Ascending aorta (tissue), 2 donors: ENCODE measurements at regions of chr12 and their contacts with region 1.

Region 1: DNA sequence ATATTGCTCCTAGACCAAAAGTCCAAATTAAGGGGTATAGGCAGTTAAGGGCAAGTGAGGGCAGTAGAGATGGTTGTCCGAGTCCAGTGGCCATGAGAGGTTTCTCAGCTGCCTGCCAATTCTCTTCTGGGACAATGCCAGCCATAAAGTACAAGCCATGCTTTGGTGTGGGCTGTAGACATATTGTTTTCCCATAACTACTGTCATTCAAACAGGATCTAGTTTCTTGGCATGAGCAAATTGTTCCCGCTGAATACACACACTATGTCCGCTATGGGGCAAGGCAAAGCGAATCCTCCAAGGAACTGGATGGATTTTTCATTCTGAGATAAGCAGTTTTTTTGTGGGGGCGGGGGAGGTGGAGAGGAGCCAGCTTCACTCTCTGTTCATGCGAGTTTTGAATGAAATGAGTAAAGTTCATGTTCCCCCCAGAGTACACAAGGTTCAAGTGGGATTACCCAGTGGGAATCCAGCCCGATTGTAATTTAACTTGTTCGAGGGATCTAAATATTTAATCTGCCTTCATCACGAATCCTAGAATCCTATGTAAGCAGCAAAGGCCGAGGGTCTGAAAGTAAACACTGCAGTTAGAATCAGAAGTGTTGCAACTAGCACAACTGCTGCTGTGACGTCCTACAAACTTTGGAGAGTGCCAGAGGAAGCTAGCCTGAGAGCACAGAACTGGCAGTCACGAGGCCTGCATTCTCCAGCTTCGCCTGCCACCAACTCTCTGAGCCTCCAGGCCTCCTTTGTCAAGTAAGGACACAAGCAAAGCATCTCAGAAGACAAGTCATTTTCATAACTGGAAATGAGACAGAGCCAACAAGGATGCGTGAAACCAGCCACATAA is 137.0 kb downstream of the CRADD start:
- DNase-seq: peak; percentile 21 to 92
- H3K4me3 ChIP-seq: peak overlapping the region; percentile 24 to 43
- H3K27ac ChIP-seq: peak overlapping the region; percentile 85 to 98
- H3K4me1 ChIP-seq: peaks cover 4 to 39% of the 10 kb centered on the region in 2 donors
- H3K27me3 ChIP-seq: no peaks in the 10 kb centered on the region
- CTCF ChIP-seq: no peak

Region 2: DNA sequence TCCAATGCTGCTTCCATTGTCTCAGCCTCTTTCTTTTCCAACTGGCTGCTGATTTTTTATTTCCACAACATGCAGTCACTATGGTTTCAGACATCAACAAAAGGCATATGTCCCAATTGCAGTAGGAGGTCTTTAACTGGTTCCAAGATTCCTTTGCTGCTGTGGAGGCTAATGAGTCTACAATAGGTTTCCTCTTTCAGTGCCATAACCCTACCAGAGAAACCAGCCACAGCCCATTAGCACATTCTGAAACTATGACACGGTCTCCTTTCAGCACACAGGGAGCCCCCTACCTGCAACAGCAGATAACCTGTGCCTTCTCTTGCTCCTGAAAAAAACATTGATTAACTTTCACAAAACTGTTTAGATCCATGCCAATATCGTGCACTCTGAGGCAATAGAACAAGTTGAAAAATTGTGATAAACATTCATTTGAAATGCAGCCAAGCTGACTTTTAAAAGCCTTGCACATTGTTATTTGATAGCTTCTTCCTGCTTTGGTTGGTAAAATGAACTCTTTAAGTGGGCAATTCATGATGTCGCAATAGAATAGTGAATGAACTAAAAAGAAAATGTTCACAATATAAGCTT is 1079.0 kb before region 1 on chr12:
- intact Hi-C with region 1: no loop called
- DNase-seq: no peak
- H3K4me3 ChIP-seq: no peak overlapping the region
- H3K27ac ChIP-seq: no peak overlapping the region
- H3K4me1 ChIP-seq: no peaks in the 10 kb centered on the region
- H3K27me3 ChIP-seq: no peaks in the 10 kb centered on the region
- CTCF ChIP-seq: no peak

Region 3: DNA sequence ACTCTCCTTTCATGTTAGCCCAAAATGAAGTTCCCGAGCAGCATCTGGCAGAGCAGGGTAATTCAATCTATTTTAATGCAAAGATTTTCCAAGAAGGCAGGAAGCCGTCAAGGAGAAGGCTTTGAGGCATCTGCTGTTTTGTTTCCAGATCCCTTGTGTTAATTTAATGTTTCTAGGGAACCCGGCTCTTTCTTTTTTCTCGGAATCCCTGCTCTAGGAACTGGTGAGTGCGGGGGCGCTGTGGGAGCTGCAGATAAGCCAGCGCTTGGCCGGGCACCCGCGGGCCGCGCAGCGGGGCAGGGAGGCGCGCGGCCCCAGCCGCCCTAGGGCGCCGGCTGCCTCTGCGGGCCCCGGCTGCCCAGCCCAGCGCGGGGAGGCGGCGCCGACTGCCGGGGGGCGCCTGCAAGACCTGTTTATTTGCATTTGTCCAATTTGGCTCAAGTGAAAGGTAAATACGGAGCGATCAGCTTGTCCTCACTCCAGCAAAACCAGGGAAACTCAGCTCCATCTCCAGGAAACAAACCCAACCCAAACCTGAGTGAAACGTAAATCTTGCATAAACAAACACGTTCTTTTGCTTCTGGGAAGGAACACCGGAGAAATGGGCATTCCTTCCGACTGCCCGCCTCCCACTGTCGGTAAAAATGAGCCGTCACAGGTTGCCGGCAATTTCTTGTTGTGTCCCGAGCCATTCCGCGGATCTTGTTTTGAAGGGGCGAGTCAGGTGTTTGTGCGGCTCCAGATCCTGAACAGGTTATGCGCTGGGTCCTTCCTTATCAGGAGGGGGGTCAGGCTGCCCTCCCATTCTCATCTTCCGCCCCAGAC is 71.9 kb before region 1 on chr12:
- intact Hi-C with region 1: loop called (anchors 5 kb)
- DNase-seq: peak in 1 of 2 donors; percentile 90
- H3K4me3 ChIP-seq: peak overlapping the region; percentile 61 to 76
- H3K27ac ChIP-seq: peak overlapping the region; percentile 90 to 93
- H3K4me1 ChIP-seq: peaks cover 2 to 18% of the 10 kb centered on the region in 2 donors
- H3K27me3 ChIP-seq: no peaks in the 10 kb centered on the region
- CTCF ChIP-seq: peak; percentile 17 to 62 (median 39)

Region 4: GRCh38 chr12:93785262-93786010 is 28.8 kb before region 1 on chr12:
- intact Hi-C with region 1: loop called (anchors 2 kb)
- DNase-seq: peak; percentile 29 to 85
- H3K4me3 ChIP-seq: peak overlapping the region in 1 of 2 donors; percentile 24
- H3K27ac ChIP-seq: peak overlapping the region; percentile 78 to 86
- H3K4me1 ChIP-seq: peaks cover 14 to 35% of the 10 kb centered on the region in 2 donors
- H3K27me3 ChIP-seq: no peaks in the 10 kb centered on the region
- CTCF ChIP-seq: no peak

Region 5: GRCh38 chr12:93883436-93884154 is 69.4 kb after region 1 on chr12:
- intact Hi-C with region 1: no loop called
- DNase-seq: no peak
- H3K4me3 ChIP-seq: no peak overlapping the region
- H3K27ac ChIP-seq: no peak overlapping the region
- H3K4me1 ChIP-seq: no peaks in the 10 kb centered on the region
- H3K27me3 ChIP-seq: no peaks in the 10 kb centered on the region
- CTCF ChIP-seq: no peak

Region 6: DNA sequence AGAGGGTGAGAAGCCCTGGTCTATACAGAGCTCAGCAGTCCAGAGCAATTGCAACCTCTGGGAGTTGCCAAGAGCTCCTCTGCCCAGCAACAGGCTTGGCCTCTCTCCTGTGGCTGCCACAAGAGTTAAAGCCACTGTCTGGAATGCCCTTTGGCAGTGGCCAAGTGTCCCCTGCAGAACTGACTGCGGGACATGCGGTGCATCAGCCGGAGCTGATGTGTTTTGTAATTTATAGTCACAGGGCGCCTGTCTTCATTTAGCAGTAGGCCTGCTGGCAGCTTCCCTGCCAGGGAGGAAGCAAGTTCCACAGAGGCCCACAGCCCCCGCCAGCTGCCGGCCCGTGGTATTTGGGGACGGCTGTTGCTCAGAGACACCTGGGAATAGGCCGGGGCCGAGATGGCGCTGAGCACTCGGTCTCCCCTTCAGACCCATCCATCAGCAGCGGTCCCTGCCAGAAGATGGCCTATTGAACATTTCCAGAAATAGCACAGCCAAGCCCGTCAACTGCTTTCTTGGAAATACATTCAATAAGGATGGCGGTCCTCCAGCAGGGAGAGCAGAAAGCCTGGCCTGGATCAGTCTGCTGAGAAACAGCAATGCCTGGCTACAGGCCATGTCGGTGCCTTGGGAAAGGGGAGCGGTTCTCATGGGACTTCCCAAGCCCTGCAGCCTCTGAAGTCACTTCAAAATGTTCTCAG is 80.3 kb after region 1 on chr12:
- intact Hi-C with region 1: loop called (anchors 5 kb)
- DNase-seq: peak; percentile 57 to 94
- H3K4me3 ChIP-seq: peak overlapping the region in 1 of 2 donors; percentile 2
- H3K27ac ChIP-seq: peak overlapping the region; percentile 73 to 75
- H3K4me1 ChIP-seq: peaks cover 4 to 17% of the 10 kb centered on the region in 2 donors
- H3K27me3 ChIP-seq: no peaks in the 10 kb centered on the region
- CTCF ChIP-seq: no peak

Region 7: GRCh38 chr12:93957870-93958269 is 143.7 kb after region 1 on chr12:
- intact Hi-C with region 1: no loop called
- DNase-seq: no peak
- H3K4me3 ChIP-seq: no peak overlapping the region
- H3K27ac ChIP-seq: no peak overlapping the region
- H3K4me1 ChIP-seq: no peaks in the 10 kb centered on the region
- H3K27me3 ChIP-seq: no peaks in the 10 kb centered on the region
- CTCF ChIP-seq: no peak

Region 8: GRCh38 chr12:93990832-93991803 is 176.9 kb after region 1 on chr12:
- intact Hi-C with region 1: no loop called
- DNase-seq: no peak
- H3K4me3 ChIP-seq: no peak overlapping the region
- H3K27ac ChIP-seq: peak overlapping the region; percentile 1 to 18
- H3K4me1 ChIP-seq: peaks cover 0 to 3% of the 10 kb centered on the region in 2 donors
- H3K27me3 ChIP-seq: no peaks in the 10 kb centered on the region
- CTCF ChIP-seq: peak in 2 of 3 experiments; percentile 5 to 31